ENCODE measurements at regions of chr4 and their contacts with region 1.

Region 1: GRCh38 chr4:142095886-142096605 is 459.7 kb downstream of the IL15 start:
- DNase-seq: peak in 1 of 2 donors; percentile 84
- H3K4me3 ChIP-seq: no peak overlapping the region
- H3K27ac ChIP-seq: peak overlapping the region; percentile 42 to 59
- H3K4me1 ChIP-seq: peaks cover 0 to 8% of the 10 kb centered on the region in 2 donors
- H3K27me3 ChIP-seq: no peaks in the 10 kb centered on the region
- CTCF ChIP-seq: no peak

Region 2: DNA sequence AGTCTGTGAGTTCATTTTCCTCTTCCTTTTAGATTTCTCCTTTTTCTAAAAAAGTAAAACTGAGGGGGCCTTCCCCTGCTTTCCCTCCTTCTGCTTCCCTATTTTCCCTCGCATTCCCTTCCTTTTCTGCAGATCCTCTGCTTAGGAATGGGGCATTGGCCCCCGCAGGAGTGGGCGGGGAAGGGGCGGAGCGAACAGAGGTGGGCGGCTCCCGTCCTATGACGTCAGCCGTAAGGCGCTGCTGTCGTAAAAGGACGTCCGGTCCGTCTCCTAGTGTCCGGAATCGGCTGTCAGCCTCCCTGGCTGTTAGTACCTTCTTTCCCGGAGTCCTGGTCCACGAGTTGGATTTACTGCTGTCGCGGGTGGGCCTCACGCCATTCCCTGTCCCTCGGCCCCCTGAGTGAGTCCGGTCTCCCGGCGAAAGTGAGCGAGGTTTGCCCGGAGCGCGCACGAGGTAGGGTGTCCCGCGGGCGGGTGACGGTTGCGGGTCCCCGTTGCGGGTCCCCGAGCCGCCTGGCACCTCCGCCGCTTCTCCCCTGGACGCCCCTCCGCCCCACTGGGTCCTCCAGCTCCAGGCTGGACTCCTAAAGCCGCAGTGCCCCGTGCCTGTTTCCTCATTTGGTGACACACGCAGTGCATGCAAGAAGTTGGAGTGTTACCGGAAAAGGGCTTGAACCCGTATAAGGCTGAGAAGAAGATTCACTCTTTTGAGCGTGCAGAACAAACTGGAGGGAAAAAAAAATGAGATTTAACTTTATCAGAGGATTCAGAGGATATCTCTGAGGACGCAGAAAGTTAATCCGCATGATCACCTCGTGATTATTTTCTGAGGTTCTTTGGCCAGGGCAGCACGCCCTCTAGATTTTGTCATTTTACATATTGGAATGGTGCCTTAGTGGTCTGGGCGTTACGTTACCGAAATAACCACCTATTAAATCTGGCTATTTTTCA is 875.1 kb before region 1 on chr4 and contains the start of gene ZNF330:
- intact Hi-C with region 1: loop called (anchors 10 kb)
- DNase-seq: peak; percentile 36 to 96
- H3K4me3 ChIP-seq: peak within 1 kb of the TSS; percentile 79 to 96
- H3K27ac ChIP-seq: peak within 1 kb of the TSS; percentile 94 to 98
- H3K4me1 ChIP-seq: peaks cover 4 to 5% of the 10 kb centered on the region in 2 donors
- H3K27me3 ChIP-seq: no peaks in the 10 kb centered on the region
- CTCF ChIP-seq: peak in 1 of 3 experiments; percentile 37
- total RNA-seq, gene ZNF330: 7.9 TPM

Region 3: DNA sequence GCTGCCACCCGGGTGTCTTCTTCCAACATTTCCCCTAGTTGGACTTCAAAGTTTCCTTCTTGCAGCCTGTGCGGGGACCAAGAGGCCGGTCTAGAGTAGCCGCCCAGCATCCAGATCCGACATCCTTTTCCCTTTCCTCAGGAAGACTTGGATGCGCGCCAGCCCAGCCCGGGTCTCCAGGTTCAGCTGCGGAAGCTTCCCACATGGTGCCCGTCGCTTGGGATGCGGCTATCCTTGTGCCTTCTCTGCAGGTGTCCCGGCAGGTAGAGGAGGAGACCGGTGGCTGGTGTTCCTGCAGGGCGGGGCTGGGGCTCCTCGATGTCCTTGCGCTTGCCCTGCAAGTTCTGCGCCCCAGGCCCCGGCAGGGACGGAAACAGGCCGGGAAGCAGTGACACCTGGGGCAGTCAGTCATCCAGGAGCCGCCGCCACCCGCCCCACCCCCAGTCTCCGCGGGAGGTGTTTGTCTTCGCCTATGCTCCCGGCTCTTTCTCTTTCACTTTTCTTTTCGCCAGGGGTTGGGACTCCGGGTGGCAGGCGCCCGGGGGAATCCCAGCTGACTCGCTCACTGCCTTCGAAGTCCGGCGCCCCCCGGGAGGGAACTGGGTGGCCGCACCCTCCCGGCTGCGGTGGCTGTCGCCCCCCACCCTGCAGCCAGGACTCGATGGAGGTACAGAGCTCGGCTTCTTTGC is 459.8 kb before region 1 on chr4 and contains the start of gene IL15:
- intact Hi-C with region 1: loop called (anchors 5 kb)
- DNase-seq: peak; percentile 29 to 79
- H3K4me3 ChIP-seq: peak within 1 kb of the TSS; percentile 88 to 94
- H3K27ac ChIP-seq: peak within 1 kb of the TSS; percentile 89 to 92
- H3K4me1 ChIP-seq: peaks cover 0 to 9% of the 10 kb centered on the region in 2 donors
- H3K27me3 ChIP-seq: no peaks in the 10 kb centered on the region
- CTCF ChIP-seq: no peak
- total RNA-seq, gene IL15: 11.5 TPM

Region 4: DNA sequence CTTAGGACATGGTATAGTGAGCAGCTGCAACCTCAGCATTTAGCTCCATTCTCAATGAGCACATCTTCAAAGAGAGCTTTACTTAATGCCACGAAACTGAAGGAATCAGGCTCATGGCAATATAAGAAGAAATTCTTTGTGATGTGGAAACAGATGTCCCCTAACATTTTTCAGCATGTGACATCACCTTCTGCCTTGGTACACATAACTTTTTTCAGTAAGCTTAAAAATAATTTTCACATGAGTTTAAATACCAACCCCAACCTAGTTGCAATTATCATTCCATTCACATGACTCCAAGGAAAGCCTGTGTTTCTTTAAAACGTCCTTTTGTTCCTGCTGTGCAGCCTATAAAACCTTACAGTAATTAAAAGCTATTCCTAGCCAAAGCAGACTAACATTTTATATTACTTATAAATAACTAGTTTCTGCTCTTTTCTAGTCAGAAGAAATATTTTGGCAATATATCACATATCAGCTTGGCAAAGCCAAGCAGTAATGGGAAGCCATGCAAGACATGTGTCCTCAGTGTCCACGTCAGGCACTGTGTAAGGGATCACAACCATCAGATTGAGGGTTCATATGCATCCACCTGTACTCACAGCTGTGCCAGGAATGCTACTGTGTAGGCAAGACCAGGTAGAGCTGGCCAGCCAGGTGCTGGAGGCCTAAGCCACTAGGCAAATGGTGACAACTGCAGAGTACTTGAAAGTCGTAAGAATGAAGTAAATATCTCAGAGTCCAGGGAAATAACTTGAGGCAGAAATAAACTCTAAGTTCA is 283.4 kb after region 1 on chr4:
- intact Hi-C with region 1: loop called (anchors 10 kb)
- DNase-seq: no peak
- H3K4me3 ChIP-seq: no peak overlapping the region
- H3K27ac ChIP-seq: peak overlapping the region; percentile 61 to 71
- H3K4me1 ChIP-seq: peaks cover 4 to 18% of the 10 kb centered on the region in 2 donors
- H3K27me3 ChIP-seq: no peaks in the 10 kb centered on the region
- CTCF ChIP-seq: no peak

Region 5: GRCh38 chr4:142817442-142817841 is 721.4 kb after region 1 on chr4:
- intact Hi-C with region 1: loop called (anchors 5 kb)
- DNase-seq: peak in 1 of 2 donors; percentile 81
- H3K4me3 ChIP-seq: peak overlapping the region; percentile 0 to 37
- H3K27ac ChIP-seq: peak overlapping the region; percentile 65 to 66
- H3K4me1 ChIP-seq: peaks cover 0 to 10% of the 10 kb centered on the region in 2 donors
- H3K27me3 ChIP-seq: no peaks in the 10 kb centered on the region
- CTCF ChIP-seq: no peak